Transverse colon (tissue), 4 donors: ENCODE measurements at regions of chr16 and their contacts with region 1.

Region 1: GRCh38 chr16:10918294-10919002 is 23.8 kb downstream of the DEXI start:
- DNase-seq: peak; percentile 93
- H3K4me3 ChIP-seq: no peak overlapping the region
- H3K27ac ChIP-seq: peak overlapping the region in 2 of 4 donors; percentile 7 to 40
- H3K4me1 ChIP-seq: peaks cover 0 to 13% (median 5%) of the 10 kb centered on the region in 4 donors
- H3K27me3 ChIP-seq: no peaks in the 10 kb centered on the region
- CTCF ChIP-seq: peak; percentile 90 to 96 (median 93)
- EP300 ChIP-seq: no peak
- POLR2A ChIP-seq: no peak

Region 2: GRCh38 chr16:10509534-10510025 is 408.9 kb before region 1 on chr16:
- in situ Hi-C with region 1: loop called in 2 of 4 experiments (anchors 10 to 25 kb)
- intact Hi-C with region 1: no loop called
- DNase-seq: peak; percentile 53
- H3K4me3 ChIP-seq: no peak overlapping the region
- H3K27ac ChIP-seq: no peak overlapping the region
- H3K4me1 ChIP-seq: peaks cover 0 to 4% (median 2%) of the 10 kb centered on the region in 4 donors
- H3K27me3 ChIP-seq: no peaks in the 10 kb centered on the region
- CTCF ChIP-seq: peak; percentile 75 to 85 (median 81)
- EP300 ChIP-seq: no peak
- POLR2A ChIP-seq: no peak

Region 3: GRCh38 chr16:10521681-10522274 is 396.7 kb before region 1 on chr16:
- in situ Hi-C with region 1: loop called in 3 of 4 experiments (anchors 10 to 25 kb)
- intact Hi-C with region 1: loop called (anchors 10 kb)
- DNase-seq: peak; percentile 70
- H3K4me3 ChIP-seq: no peak overlapping the region
- H3K27ac ChIP-seq: no peak overlapping the region
- H3K4me1 ChIP-seq: no peaks in the 10 kb centered on the region
- H3K27me3 ChIP-seq: no peaks in the 10 kb centered on the region
- CTCF ChIP-seq: peak; percentile 84 to 92 (median 88)
- EP300 ChIP-seq: no peak
- POLR2A ChIP-seq: no peak

Region 4: GRCh38 chr16:10541366-10541765 is 377.1 kb before region 1 on chr16:
- in situ Hi-C with region 1: loop called in 1 of 4 experiments (anchors 25 kb)
- intact Hi-C with region 1: no loop called
- DNase-seq: no peak
- H3K4me3 ChIP-seq: no peak overlapping the region
- H3K27ac ChIP-seq: peak overlapping the region in 2 of 4 donors; percentile 19 to 42
- H3K4me1 ChIP-seq: no peaks in the 10 kb centered on the region
- H3K27me3 ChIP-seq: no peaks in the 10 kb centered on the region
- CTCF ChIP-seq: no peak
- EP300 ChIP-seq: no peak
- POLR2A ChIP-seq: no peak

Region 5: DNA sequence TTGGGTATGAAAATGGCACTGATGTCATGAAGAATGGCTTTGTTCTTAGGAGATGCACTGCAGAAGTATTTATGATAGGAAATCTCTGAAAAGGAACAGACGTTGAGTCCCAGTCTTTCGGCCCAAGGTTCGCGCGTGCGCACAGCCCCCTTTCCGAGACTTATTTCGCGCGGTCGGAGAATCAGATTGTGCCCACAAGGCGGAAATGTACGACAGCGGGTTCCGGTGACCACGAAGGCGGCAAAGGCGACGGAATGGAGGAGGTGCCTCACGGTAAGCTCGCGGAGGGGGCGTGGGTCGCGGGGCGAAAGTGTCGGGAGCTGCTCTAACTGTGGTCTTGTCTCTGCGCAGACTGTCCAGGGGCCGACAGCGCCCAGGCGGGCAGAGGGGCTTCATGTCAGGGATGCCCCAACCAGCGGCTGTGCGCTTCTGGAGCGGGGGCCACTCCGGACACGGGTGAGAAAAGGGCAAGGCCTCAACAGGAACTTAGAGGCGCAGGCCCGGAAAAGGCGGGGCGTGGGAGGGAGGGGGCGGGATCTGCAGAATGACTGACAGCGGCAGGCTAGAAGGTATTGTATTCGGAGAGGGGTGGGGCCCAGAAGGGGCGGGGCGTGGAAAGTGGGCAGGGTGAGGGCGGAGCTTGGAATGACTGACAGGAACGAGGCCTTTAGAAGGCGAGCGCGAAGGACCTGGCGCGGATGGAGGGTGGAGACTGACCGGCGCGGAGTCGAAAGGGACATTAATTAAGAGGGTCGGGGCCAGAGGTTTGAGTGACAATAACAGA is 174.6 kb before region 1 on chr16 and contains the start of gene NUBP1:
- in situ Hi-C with region 1: loop called in 1 of 4 experiments (anchors 10 kb)
- intact Hi-C with region 1: loop called (anchors 10 kb)
- DNase-seq: peak; percentile 100
- H3K4me3 ChIP-seq: peak within 1 kb of the TSS; percentile 13 to 61 (median 52)
- H3K27ac ChIP-seq: peak within 1 kb of the TSS; percentile 88 to 98 (median 92)
- H3K4me1 ChIP-seq: peaks cover 5 to 24% (median 16%) of the 10 kb centered on the region in 4 donors
- H3K27me3 ChIP-seq: no peaks in the 10 kb centered on the region
- CTCF ChIP-seq: peak in 2 of 5 experiments; percentile 40 to 48
- EP300 ChIP-seq: no peak
- POLR2A ChIP-seq: peak; percentile 83
- total RNA-seq, gene NUBP1: 11.6 to 23.8 (median 22.5) TPM

Region 6: GRCh38 chr16:10752843-10753523 is 165.5 kb before region 1 on chr16:
- in situ Hi-C with region 1: loop called in 3 of 4 experiments (anchors 10 to 25 kb)
- intact Hi-C with region 1: loop called (anchors 10 kb)
- DNase-seq: peak; percentile 55
- H3K4me3 ChIP-seq: no peak overlapping the region
- H3K27ac ChIP-seq: no peak overlapping the region
- H3K4me1 ChIP-seq: peaks cover 0 to 7% (median 0%) of the 10 kb centered on the region in 4 donors
- H3K27me3 ChIP-seq: no peaks in the 10 kb centered on the region
- CTCF ChIP-seq: no peak
- EP300 ChIP-seq: no peak
- POLR2A ChIP-seq: no peak

Region 7: GRCh38 chr16:10828851-10829731 is 89.4 kb before region 1 on chr16:
- in situ Hi-C with region 1: no loop called
- intact Hi-C with region 1: loop called (anchors 10 kb)
- DNase-seq: peak; percentile 86
- H3K4me3 ChIP-seq: peak overlapping the region in 1 of 4 donors; percentile 13
- H3K27ac ChIP-seq: peak overlapping the region; percentile 77 to 93 (median 84)
- H3K4me1 ChIP-seq: peaks cover 13 to 38% (median 21%) of the 10 kb centered on the region in 4 donors
- H3K27me3 ChIP-seq: no peaks in the 10 kb centered on the region
- CTCF ChIP-seq: no peak
- EP300 ChIP-seq: peak; percentile 22
- POLR2A ChIP-seq: no peak

Region 8: GRCh38 chr16:10957771-10958486 is 39.5 kb after region 1 on chr16:
- in situ Hi-C with region 1: no loop called
- intact Hi-C with region 1: no loop called
- DNase-seq: no peak
- H3K4me3 ChIP-seq: no peak overlapping the region
- H3K27ac ChIP-seq: no peak overlapping the region
- H3K4me1 ChIP-seq: peaks cover 0 to 12% (median 8%) of the 10 kb centered on the region in 4 donors
- H3K27me3 ChIP-seq: no peaks in the 10 kb centered on the region
- CTCF ChIP-seq: no peak
- EP300 ChIP-seq: no peak
- POLR2A ChIP-seq: no peak